Naive thymus-derived CD4-positive, alpha-beta T cell (primary cell): ENCODE measurements at regions of chr13 and their contacts with region 1.

Region 1: DNA sequence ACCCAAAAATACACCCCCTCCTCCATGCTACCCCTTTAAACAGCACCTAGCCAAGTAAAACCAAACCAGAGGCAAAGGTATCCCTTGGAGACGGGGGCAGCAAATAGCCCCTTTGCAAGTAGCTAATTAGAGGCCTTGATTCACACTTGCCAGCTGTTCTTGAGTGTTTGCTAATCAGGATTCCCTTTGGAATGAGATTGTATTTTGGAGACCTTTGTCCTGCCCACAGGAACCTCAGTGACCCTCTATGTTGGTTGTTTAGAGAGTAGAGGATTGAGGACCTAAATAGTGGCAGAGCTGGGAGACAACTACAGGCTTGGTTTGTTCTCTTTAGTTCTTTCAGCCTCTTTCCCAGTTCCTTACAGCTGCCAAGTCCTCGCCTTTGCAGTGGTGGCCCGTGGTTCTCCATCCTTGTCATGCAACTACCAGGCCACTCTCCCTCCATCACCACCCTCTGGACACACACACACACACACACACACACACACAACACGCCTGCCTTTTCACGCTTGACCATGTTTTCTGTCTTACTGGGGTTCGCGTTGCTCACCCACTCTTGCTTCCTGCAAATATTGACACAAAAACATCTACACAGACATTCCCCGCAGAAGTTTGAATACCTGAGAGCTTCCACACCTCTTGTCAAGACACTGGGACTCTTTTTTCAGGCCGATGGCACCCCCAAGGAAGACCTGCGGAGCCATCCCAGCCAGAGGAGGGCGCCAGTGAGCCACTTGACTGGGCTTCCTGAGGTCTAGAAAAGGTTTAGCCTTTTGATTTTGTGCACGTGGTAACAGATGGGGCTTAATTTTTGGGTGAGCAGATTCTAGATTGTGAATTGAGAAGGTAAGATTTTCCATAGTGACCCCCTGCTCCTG is 80.0 kb upstream of the GPR183 start:
- DNase-seq: peak; percentile 74 to 89 (median 84)
- ATAC-seq: peak; percentile 65
- H3K4me3 ChIP-seq: no peak overlapping the region
- H3K4me3 Mint-ChIP-seq: peak overlapping the region in 9 of 10 donors; percentile 2 to 73 (median 62)
- H3K27ac ChIP-seq: peak overlapping the region; percentile 85
- H3K27ac Mint-ChIP-seq: peak overlapping the region; percentile 44 to 99 (median 98)
- H3K4me1 ChIP-seq: peaks cover 59 to 65% of the 10 kb centered on the region in 2 donors
- H3K4me1 Mint-ChIP-seq: peaks cover 35 to 83% (median 76%) of the 10 kb centered on the region in 7 donors
- H3K27me3 ChIP-seq: no peaks in the 10 kb centered on the region
- H3K27me3 Mint-ChIP-seq: no peaks in the 10 kb centered on the region

Region 2: DNA sequence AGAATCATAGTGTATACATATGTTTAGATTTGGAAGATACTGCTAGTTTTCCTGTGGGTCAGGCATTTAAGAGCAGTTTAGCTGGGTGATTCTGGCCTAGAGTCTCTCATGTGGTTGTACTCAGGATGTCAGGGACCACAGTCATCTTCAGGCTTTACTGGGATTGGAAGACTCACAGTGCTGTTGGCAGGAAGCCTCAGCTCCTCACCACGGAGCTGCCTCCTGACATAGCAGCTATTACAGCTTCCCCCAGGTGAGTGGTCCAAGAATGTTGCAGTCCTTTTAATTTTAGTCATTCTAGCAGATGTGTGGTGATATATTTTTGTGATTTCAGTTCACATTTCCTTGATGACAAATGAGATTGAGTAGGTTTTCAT is 112.1 kb before region 1 on chr13:
- CTCF ChIA-PET with region 1: interaction called, 78 read pairs
- POLR2A ChIA-PET with region 1: interaction called, 44 read pairs
- intact Hi-C with region 1: no loop called
- DNase-seq: peak in 4 of 9 donors; percentile 33 to 41 (median 38)
- ATAC-seq: peak; percentile 52
- H3K4me3 ChIP-seq: peak overlapping the region; percentile 5
- H3K4me3 Mint-ChIP-seq: peak overlapping the region; percentile 31 to 77 (median 67)
- H3K27ac ChIP-seq: peak overlapping the region; percentile 49
- H3K27ac Mint-ChIP-seq: peak overlapping the region; percentile 83 to 95 (median 92)
- H3K4me1 ChIP-seq: peaks cover 61 to 89% of the 10 kb centered on the region in 2 donors
- H3K4me1 Mint-ChIP-seq: peaks cover 64 to 100% (median 98%) of the 10 kb centered on the region in 7 donors
- H3K27me3 ChIP-seq: no peaks in the 10 kb centered on the region
- H3K27me3 Mint-ChIP-seq: no peaks in the 10 kb centered on the region

Region 3: GRCh38 chr13:99366075-99366987 is 20.8 kb before region 1 on chr13:
- CTCF ChIA-PET with region 1: interaction called, 16 read pairs
- POLR2A ChIA-PET with region 1: interaction called, 105 read pairs
- intact Hi-C with region 1: loop called in 1 of 2 experiments (anchors 1 kb)
- DNase-seq: peak in 2 of 9 donors; percentile 21 to 41
- ATAC-seq: peak; percentile 30
- H3K4me3 ChIP-seq: peak overlapping the region; percentile 6
- H3K4me3 Mint-ChIP-seq: peak overlapping the region in 9 of 10 donors; percentile 46 to 87 (median 78)
- H3K27ac ChIP-seq: peak overlapping the region; percentile 78
- H3K27ac Mint-ChIP-seq: peak overlapping the region; percentile 50 to 100 (median 99)
- H3K4me1 ChIP-seq: peaks cover 76 to 81% of the 10 kb centered on the region in 2 donors
- H3K4me1 Mint-ChIP-seq: peaks cover 55 to 100% (median 95%) of the 10 kb centered on the region in 7 donors
- H3K27me3 ChIP-seq: no peaks in the 10 kb centered on the region
- H3K27me3 Mint-ChIP-seq: no peaks in the 10 kb centered on the region

Region 4: DNA sequence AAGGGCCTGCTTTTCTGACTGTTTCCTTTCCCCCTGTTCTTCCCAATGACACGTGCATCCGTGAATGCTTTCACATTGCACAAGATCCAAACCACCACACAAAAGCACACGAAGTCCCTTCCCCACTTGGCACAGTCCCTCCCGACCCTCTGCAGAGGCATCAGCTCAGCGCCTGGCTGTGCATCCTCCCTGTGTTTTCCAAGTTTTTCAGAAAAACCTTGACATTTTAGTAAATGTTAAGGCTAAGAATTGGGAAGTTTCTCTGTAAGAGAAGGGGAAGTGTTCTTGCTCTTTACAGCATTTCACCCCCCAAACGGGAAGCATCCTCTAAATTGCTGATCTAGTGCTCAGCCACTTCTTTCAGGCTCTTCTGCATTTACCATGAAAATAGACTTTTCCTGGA is 19.6 kb after region 1 on chr13:
- CTCF ChIA-PET with region 1: interaction called, 10 read pairs
- POLR2A ChIA-PET with region 1: interaction called, 14 read pairs
- intact Hi-C with region 1: no loop called
- DNase-seq: no peak
- ATAC-seq: no peak
- H3K4me3 ChIP-seq: no peak overlapping the region
- H3K4me3 Mint-ChIP-seq: peak overlapping the region in 8 of 10 donors; percentile 9 to 74 (median 44)
- H3K27ac ChIP-seq: peak overlapping the region; percentile 2
- H3K27ac Mint-ChIP-seq: peak overlapping the region in 8 of 9 donors; percentile 49 to 91 (median 76)
- H3K4me1 ChIP-seq: peaks cover 6 to 14% of the 10 kb centered on the region in 2 donors
- H3K4me1 Mint-ChIP-seq: peaks cover 21 to 85% (median 62%) of the 10 kb centered on the region in 7 donors
- H3K27me3 ChIP-seq: no peaks in the 10 kb centered on the region
- H3K27me3 Mint-ChIP-seq: no peaks in the 10 kb centered on the region

Region 5: DNA sequence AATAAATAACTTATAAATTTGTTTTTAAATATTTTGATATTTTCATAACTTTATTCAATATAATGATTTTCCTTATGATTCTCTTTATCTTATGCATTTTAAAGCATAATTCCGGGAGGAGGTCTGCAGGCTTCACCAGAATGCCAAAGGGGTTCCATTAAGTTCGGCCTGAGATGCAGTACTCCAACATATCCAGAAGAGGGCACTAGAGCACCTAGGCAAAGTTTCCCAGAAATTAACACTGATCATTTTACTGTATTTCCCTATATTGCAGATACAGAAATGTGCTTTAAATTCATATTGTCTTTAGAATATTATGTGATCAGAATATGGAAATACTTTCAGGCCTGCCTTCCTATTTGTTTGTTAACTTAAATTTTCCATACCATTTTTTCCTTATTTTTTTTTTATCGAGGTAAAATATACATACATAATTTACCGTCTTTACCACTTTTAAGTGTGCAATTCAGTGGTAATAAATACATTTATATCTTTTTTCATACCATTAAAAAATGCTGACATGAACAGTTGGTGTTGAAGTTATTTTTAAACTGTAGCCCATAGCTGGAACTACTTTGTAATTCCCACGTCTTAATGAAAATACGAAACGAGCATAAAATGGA is 55.2 kb after region 1 on chr13:
- CTCF ChIA-PET with region 1: interaction called, 173 read pairs
- POLR2A ChIA-PET with region 1: interaction called, 44 read pairs
- intact Hi-C with region 1: loop called (anchors 1 kb)
- DNase-seq: peak in 7 of 9 donors; percentile 50 to 75 (median 68)
- ATAC-seq: peak; percentile 95
- H3K4me3 ChIP-seq: no peak overlapping the region
- H3K4me3 Mint-ChIP-seq: no peak overlapping the region
- H3K27ac ChIP-seq: no peak overlapping the region
- H3K27ac Mint-ChIP-seq: peak overlapping the region in 1 of 9 donors; percentile 47
- H3K4me1 ChIP-seq: peaks cover 0 to 3% of the 10 kb centered on the region in 2 donors
- H3K4me1 Mint-ChIP-seq: peaks cover 2 to 17% (median 7%) of the 10 kb centered on the region in 7 donors
- H3K27me3 ChIP-seq: no peaks in the 10 kb centered on the region
- H3K27me3 Mint-ChIP-seq: peaks cover 0 to 30% (median 0%) of the 10 kb centered on the region in 5 donors